Activated CD4-positive, alpha-beta T cell treated with anti-CD3 and anti-CD28 coated beads, Interleukin-2, amount 10 ng/mL, durations not matched to agents 24 days and 14 days (primary cell): ENCODE measurements at regions of chr15 and their contacts with region 1.

Region 1: DNA sequence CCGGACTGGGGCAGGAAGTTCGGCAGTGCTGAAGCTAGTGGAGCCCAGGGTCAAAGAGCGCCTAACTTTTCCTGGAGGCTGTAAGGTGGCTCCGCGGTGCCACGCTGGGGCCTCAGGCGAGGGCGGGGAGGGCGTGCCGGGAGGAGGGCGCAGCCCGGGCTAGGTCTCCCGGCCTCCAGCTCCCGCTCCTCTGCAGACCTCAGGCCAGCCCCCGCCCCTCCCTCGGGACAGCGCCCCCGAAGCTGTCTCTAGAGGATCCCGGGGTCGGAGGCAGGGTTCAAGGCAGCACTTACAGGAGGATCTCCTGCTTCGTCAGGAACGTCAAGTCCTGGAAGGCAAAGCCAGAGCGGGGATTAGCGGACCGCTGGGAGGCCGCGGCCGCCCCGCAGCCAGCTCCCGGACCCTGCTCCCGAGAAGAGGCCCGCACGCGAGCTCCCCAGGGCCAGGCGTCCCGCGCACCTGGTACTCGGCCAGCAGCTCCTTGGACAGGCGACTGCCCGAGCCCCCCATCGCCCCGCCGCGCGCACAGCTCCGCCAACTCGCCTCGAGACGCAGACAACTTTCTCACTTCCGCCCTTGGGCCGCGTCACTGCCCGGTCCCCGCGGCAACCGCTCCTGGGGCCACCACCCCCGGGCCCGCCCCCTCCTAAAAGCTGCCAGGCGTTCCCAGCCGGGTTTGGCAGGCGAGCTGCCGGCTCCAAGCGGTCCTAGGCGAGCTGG is at the start of gene CIB1:
- DNase-seq: peak; percentile 99
- H3K4me3 Mint-ChIP-seq: peak within 1 kb of the TSS; percentile 99
- H3K27ac Mint-ChIP-seq: peak within 1 kb of the TSS; percentile 95
- H3K4me1 Mint-ChIP-seq: peaks cover 43% of the 10 kb centered on the region
- H3K27me3 Mint-ChIP-seq: no peaks in the 10 kb centered on the region
- total RNA-seq, gene CIB1: 149 and 156 TPM in 2 replicates

Region 2: GRCh38 chr15:90099868-90100831 is 133.4 kb before region 1 on chr15:
- intact Hi-C with region 1: loop called (anchors 5 kb)
- DNase-seq: peak; percentile 74
- H3K4me3 Mint-ChIP-seq: peak overlapping the region; percentile 86
- H3K27ac Mint-ChIP-seq: peak overlapping the region; percentile 98
- H3K4me1 Mint-ChIP-seq: peaks cover 70% of the 10 kb centered on the region
- H3K27me3 Mint-ChIP-seq: peaks cover 8% of the 10 kb centered on the region

Region 3: GRCh38 chr15:90165659-90166421 is 67.7 kb before region 1 on chr15:
- intact Hi-C with region 1: no loop called
- DNase-seq: peak; percentile 75
- H3K4me3 Mint-ChIP-seq: peak overlapping the region; percentile 43
- H3K27ac Mint-ChIP-seq: peak overlapping the region; percentile 80
- H3K4me1 Mint-ChIP-seq: peaks cover 28% of the 10 kb centered on the region
- H3K27me3 Mint-ChIP-seq: peaks cover 4% of the 10 kb centered on the region

Region 4: GRCh38 chr15:90201130-90201949 is 32.2 kb before region 1 on chr15 and contains the start of gene SEMA4B:
- intact Hi-C with region 1: loop called (anchors 1 kb)
- DNase-seq: peak; percentile 94
- H3K4me3 Mint-ChIP-seq: peak within 1 kb of the TSS; percentile 90
- H3K27ac Mint-ChIP-seq: peak within 1 kb of the TSS; percentile 71
- H3K4me1 Mint-ChIP-seq: peaks cover 25% of the 10 kb centered on the region
- H3K27me3 Mint-ChIP-seq: peaks cover 2% of the 10 kb centered on the region
- total RNA-seq, gene SEMA4B: 17.5 and 18.9 TPM in 2 replicates

Region 5: DNA sequence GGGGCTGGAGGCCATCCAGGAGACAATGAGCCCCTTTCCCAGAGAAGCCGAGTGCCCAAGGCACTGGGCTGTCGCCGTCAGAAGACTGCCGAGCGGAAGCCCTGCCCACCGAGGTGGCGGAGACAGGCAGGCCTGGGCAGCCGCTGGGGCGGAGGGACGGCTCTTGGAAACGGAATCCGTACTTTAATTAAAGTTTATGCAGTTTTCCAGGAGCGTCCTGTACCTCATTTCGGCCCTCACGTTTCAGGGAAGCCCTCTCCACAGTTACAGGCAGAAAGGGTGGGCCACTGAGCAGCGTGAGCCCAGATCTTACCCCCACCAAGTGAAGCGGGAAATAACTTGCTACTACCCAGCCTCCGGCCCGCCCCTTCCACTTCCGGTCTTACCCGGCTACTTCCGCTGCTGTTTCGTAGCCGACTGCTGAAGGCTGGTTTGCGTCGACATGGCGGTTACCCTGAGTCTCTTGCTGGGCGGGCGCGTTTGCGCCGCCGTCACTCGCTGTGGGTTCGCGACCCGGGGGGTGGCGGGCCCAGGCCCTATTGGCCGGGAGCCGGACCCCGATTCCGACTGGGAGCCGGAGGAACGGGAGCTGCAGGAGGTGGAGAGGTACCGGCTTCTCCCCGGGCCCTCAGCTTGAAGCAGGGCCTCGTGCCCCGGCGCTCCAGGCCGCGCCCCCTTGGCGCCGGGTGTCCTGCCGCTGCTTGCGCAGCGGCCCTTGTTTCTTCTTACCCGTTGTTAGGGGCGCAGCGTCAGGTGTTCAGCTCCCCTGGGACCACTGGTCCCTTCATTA is 31.9 kb after region 1 on chr15 and contains the start of gene NGRN:
- intact Hi-C with region 1: loop called (anchors 1 kb)
- DNase-seq: peak; percentile 98
- H3K4me3 Mint-ChIP-seq: peak within 1 kb of the TSS; percentile 94
- H3K27ac Mint-ChIP-seq: peak within 1 kb of the TSS; percentile 97
- H3K4me1 Mint-ChIP-seq: peaks cover 33% of the 10 kb centered on the region
- H3K27me3 Mint-ChIP-seq: no peaks in the 10 kb centered on the region
- total RNA-seq, gene NGRN: 43.2 and 44.3 TPM in 2 replicates

Region 6: GRCh38 chr15:90665288-90666134 is 432.0 kb after region 1 on chr15:
- intact Hi-C with region 1: no loop called
- DNase-seq: peak; percentile 90
- H3K4me3 Mint-ChIP-seq: peak overlapping the region; percentile 87
- H3K27ac Mint-ChIP-seq: peak overlapping the region; percentile 92
- H3K4me1 Mint-ChIP-seq: peaks cover 53% of the 10 kb centered on the region
- H3K27me3 Mint-ChIP-seq: peaks cover 3% of the 10 kb centered on the region